ENCODE measurements at regions of chr4 and their contacts with region 1.

Region 1: DNA sequence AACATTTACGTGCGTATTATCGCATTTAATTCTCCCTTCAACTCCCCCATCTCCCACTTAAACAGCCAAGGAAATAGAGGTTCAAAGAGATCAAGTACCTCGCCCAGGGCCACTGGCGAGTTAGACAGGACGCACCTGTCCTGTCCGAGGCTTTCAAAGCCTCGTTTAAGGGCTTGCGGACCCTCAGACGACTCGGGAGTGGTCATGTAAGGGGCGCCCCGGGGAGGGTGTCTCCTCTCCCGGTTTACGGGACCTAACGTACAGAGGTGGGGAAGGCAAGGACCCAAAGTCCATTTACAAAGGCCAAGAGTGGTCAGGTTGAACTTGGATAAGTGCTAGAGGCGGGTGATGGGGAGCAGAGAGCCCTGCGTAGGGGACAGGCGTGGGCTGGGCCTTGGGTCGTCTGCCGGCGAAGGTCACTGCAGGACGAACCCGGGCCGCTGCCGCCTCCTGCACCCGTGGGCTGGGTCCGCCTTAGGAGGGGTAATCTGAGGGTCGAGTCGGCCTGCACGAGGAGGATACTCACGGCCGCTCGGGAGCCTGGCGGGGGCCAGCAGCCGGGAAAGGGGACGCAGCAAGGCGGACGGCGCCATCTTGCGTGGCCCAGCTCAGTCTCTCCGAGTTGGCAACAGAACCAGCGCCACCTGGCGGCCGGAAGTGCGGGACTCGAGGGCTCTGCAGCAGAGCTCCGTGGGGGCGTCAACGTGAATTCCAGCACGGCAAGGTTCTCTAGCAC is 5.9 kb upstream of the NAA15 start:
- DNase-seq: peak; percentile 97
- ATAC-seq: peak; percentile 93
- H3K4me3 Mint-ChIP-seq: peak overlapping the region; percentile 94
- H3K27ac Mint-ChIP-seq: peak overlapping the region; percentile 82
- H3K4me1 Mint-ChIP-seq: peaks cover 31% of the 10 kb centered on the region; the same call in 1 of the 2 replicates
- H3K27me3 Mint-ChIP-seq: no peaks in the 10 kb centered on the region
- CTCF ChIP-seq: peak; percentile 82

Region 2: DNA sequence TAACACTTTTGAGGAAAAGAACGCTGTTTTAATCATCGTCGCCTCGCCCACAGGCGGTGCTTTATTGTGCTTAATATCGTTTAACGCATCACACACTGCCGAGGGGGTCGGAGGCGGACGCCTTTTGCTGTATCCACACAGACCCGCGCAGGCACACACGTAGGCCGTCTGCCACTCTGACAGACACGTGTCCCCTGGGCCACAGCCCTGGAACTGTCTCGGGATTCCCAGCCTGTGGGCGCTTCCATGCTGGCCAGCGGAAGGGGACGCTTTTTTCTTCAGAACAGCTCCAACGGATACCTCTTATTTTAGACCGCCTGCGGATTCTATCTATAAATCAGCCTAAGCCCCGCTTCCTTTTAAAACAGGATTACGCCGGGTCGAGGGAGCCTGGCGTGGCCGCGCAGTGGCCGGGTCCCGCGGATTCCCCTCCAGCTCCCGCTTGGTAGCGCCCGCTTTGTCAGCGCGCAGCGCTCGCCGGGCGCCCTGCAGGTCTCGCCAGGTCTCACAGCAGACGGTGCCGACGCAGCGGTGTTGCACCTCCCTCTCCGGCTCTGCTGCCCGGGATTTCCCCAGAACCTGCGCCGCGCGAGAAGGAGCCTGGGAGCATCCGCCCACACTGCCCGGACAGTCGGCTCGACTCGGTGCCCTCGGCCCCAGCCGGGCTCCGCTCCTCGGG is 280.0 kb before region 1 on chr4 and contains the start of gene NOCT:
- CTCF ChIA-PET with region 1: interaction called, 11 read pairs
- POLR2A ChIA-PET with region 1: no interaction called
- DNase-seq: peak; percentile 90
- ATAC-seq: peak; percentile 82
- H3K4me3 Mint-ChIP-seq: peak within 1 kb of the TSS; percentile 93
- H3K27ac Mint-ChIP-seq: peak within 1 kb of the TSS; percentile 95
- H3K4me1 Mint-ChIP-seq: peaks cover 54% of the 10 kb centered on the region
- H3K27me3 Mint-ChIP-seq: no peaks in the 10 kb centered on the region
- CTCF ChIP-seq: no peak
- total RNA-seq, gene NOCT: 37.9 to 43.4 TPM (median 39.2 TPM) in 3 replicates

Region 3: GRCh38 chr4:139099366-139099982 is 195.9 kb before region 1 on chr4:
- CTCF ChIA-PET with region 1: interaction called, 23 read pairs
- POLR2A ChIA-PET with region 1: no interaction called
- DNase-seq: peak; percentile 74
- ATAC-seq: peak; percentile 73
- H3K4me3 Mint-ChIP-seq: no peak overlapping the region
- H3K27ac Mint-ChIP-seq: no peak overlapping the region
- H3K4me1 Mint-ChIP-seq: peaks cover 30% of the 10 kb centered on the region
- H3K27me3 Mint-ChIP-seq: no peaks in the 10 kb centered on the region
- CTCF ChIP-seq: peak; percentile 74

Region 4: GRCh38 chr4:139177868-139178611 is 117.3 kb before region 1 on chr4:
- CTCF ChIA-PET with region 1: interaction called, 40 read pairs
- POLR2A ChIA-PET with region 1: interaction called, 59 read pairs
- DNase-seq: peak; percentile 96
- ATAC-seq: peak; percentile 72
- H3K4me3 Mint-ChIP-seq: peak overlapping the region; percentile 77
- H3K27ac Mint-ChIP-seq: peak overlapping the region; percentile 98
- H3K4me1 Mint-ChIP-seq: peaks cover 31% of the 10 kb centered on the region
- H3K27me3 Mint-ChIP-seq: peaks cover 19% of the 10 kb centered on the region
- CTCF ChIP-seq: no peak

Region 5: DNA sequence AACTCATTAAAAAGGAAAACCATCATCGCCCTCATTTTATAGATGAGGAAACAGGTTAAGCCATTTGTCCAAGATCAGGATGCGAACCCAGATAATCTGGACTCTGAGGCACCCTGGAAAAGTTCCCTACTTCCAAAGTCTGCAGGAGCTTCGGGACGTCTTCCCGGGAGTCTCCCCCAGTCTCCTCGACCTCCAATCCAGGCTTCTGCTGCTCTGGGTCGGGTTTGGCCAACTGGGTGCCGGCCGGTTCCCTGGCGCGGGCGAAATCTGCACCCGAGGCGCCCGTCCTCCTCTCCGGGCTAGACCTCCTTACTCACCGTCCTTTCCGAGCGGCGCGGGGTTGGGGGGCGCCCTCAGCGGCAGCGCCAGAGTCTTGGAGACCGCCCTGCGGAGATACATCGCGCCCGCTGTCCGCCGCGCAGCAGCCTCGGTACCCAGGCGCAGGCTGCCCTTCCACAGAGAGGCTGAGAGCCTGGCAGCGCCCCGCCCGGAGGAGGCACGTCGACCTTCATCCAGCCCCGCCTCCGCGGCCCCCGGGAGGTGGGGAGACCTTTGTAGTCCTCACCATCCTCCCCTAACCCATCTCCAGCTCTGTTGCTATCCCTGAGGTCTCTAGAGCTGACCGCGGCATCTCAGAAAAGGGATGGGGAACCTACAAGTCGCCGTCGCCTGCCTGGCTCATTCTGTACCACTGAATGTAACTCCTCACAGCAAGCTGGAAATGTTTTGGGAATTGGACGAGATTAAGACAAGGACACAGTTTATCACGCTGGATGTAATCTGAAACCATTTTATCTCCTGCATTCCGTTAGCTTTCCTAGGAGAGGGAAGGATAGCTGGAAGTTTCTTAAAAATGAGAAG is 15.4 kb before region 1 on chr4 and contains the start of gene MGARP:
- CTCF ChIA-PET with region 1: interaction called, 25 read pairs
- POLR2A ChIA-PET with region 1: interaction called, 4 read pairs
- DNase-seq: peak; percentile 83
- ATAC-seq: peak; percentile 89
- H3K4me3 Mint-ChIP-seq: peak within 1 kb of the TSS; percentile 79
- H3K27ac Mint-ChIP-seq: no peak within 1 kb of the TSS
- H3K4me1 Mint-ChIP-seq: peaks cover 18% of the 10 kb centered on the region
- H3K27me3 Mint-ChIP-seq: peaks cover 55% of the 10 kb centered on the region
- CTCF ChIP-seq: no peak
- total RNA-seq, gene MGARP: 4.6 to 7.5 TPM (median 6.2 TPM) in 3 replicates

Measured in WTC11 (cell line).